Panc1 (cell line): ENCODE measurements at regions of chr14 and their contacts with region 1.

Region 1: DNA sequence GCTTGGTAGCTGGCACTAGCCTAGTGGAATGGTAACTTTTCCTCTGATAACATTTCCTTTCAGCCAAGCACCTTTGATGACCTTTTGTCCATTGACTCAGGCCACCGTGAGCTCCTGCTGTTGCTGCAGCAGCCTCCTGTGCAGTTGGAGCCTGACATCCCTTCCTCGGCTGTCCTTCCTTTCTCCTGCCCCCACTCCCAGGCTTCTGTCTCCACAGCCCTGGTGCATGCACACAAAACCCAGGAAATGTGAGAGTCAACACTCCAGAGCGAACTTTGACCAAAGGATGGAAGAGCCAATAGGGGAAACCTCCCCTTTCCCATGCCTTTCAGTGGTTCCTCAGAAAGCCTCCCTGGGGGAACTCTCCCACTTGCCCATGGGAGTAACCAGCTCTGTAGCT is 115.0 kb downstream of the TMEM260 start:
- DNase-seq: no peak
- ATAC-seq: no peak
- H3K4me3 ChIP-seq: no peak overlapping the region
- H3K27ac ChIP-seq: no peak overlapping the region
- H3K4me1 ChIP-seq: no peaks in the 10 kb centered on the region
- H3K27me3 ChIP-seq: no peaks in the 10 kb centered on the region; the same call in 1 of the 2 replicates
- CTCF ChIP-seq: no peak

Region 2: GRCh38 chr14:56666716-56667115 is 27.9 kb before region 1 on chr14:
- CTCF ChIA-PET with region 1: no interaction called
- POLR2A ChIA-PET with region 1: no interaction called
- in situ Hi-C with region 1: no loop called
- intact Hi-C with region 1: no loop called
- DNase-seq: no peak
- ATAC-seq: no peak
- H3K4me3 ChIP-seq: no peak overlapping the region
- H3K27ac ChIP-seq: no peak overlapping the region
- H3K4me1 ChIP-seq: no peaks in the 10 kb centered on the region
- H3K27me3 ChIP-seq: no peaks in the 10 kb centered on the region
- CTCF ChIP-seq: no peak

Region 3: DNA sequence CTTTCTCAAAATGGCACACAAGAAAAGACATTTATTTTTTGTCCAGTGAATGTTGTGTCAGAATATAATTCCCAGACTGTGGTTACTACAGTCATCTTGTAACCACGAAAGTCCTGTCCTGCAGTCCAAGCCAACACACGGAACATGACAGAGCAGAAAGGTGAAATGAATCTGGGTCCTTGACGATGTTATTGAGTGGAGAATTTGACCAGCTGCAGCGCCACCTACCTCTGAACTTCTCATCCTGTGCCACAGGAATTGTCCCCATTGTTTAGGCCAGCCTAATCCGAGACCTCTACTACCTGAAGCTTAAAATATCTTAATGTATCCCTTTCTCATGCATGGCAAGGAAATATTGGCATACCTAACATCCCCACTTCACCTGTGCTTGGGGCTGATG is 179.8 kb after region 1 on chr14:
- CTCF ChIA-PET with region 1: no interaction called
- POLR2A ChIA-PET with region 1: interaction called, 10 read pairs
- in situ Hi-C with region 1: no loop called
- intact Hi-C with region 1: no loop called
- DNase-seq: peak; percentile 5
- ATAC-seq: no peak
- H3K4me3 ChIP-seq: no peak overlapping the region
- H3K27ac ChIP-seq: no peak overlapping the region
- H3K4me1 ChIP-seq: no peaks in the 10 kb centered on the region
- H3K27me3 ChIP-seq: no peaks in the 10 kb centered on the region
- CTCF ChIP-seq: peak; percentile 46